ENCODE measurements at regions of chr19 and their contacts with region 1.

Region 1: GRCh38 chr19:19528721-19529490 is at the start of gene YJEFN3:
- DNase-seq: no peak
- ATAC-seq: no peak
- H3K4me3 ChIP-seq: no peak within 1 kb of the TSS
- H3K27ac ChIP-seq: no peak within 1 kb of the TSS
- H3K4me1 ChIP-seq: peaks cover 8% of the 10 kb centered on the region
- H3K27me3 ChIP-seq: no peaks in the 10 kb centered on the region
- CTCF ChIP-seq: no peak
- POLR2A ChIP-seq: no peak
- total RNA-seq, gene YJEFN3: 2.6 to 11.2 TPM

Region 2: DNA sequence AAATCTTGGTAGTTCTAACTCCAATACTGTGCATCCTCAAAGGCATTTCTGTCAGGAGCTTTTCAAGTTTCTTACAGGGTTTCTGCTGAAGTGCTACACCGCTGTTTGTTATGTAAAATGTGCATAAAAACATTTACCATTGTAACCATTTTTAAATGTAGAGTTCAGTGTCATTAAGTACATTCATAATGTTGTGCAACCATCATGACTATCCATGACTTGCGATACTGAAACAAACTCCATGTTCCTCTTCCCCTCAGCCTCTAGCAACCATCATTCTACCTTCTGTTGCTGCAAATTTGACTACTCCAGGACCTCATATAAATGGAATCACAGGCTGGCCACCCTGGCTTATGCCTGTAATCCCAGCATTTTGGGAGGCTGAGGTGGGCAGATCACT is 479.5 kb before region 1 on chr19:
- intact Hi-C with region 1: no loop called
- DNase-seq: no peak
- ATAC-seq: no peak
- H3K4me3 ChIP-seq: no peak overlapping the region
- H3K27ac ChIP-seq: no peak overlapping the region
- H3K4me1 ChIP-seq: no peaks in the 10 kb centered on the region
- H3K27me3 ChIP-seq: no peaks in the 10 kb centered on the region
- CTCF ChIP-seq: no peak
- POLR2A ChIP-seq: no peak

Region 3: GRCh38 chr19:19459707-19460251 is 69.1 kb before region 1 on chr19:
- intact Hi-C with region 1: no loop called
- DNase-seq: peak in 3 of 4 donors; percentile 27 to 55 (median 35)
- ATAC-seq: no peak
- H3K4me3 ChIP-seq: no peak overlapping the region
- H3K27ac ChIP-seq: peak overlapping the region in 2 of 4 donors; percentile 85 to 87
- H3K4me1 ChIP-seq: peaks cover 63% of the 10 kb centered on the region
- H3K27me3 ChIP-seq: no peaks in the 10 kb centered on the region
- CTCF ChIP-seq: no peak
- POLR2A ChIP-seq: no peak

Region 4: DNA sequence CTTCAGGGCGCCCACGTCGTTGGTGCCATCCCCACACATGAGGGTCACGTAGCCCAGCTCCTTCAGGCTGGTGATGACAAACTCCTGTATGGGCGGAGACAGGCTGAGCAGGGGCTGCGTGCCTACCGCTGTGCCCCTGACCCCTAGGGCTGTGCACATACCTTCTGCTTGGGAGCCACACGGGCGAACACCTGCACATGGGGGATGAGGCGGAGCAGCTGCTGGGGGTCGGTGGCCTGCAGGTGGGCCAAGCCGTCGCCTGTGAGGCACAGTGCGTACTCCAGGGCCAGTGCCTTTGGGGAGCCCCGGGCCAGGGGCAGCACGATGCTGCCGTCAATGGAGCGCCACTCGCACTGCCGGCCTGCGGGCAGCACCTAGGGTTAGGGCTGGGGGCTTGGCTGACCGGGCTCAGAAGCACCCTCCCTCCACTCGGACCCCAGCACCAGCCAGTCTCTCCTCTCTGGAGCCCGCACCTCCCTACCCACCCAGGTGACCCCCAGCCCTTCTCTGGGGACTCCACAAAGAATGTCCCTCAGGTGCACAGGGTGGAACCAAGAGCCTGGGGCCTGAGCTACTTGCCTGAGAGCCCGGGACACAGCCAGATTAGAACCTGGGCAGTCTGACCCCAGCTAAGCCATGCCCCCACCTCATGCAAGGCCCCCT is 120.8 kb after region 1 on chr19:
- intact Hi-C with region 1: loop called (anchors 5 kb)
- DNase-seq: no peak
- ATAC-seq: no peak
- H3K4me3 ChIP-seq: no peak overlapping the region
- H3K27ac ChIP-seq: no peak overlapping the region
- H3K4me1 ChIP-seq: no peaks in the 10 kb centered on the region
- H3K27me3 ChIP-seq: no peaks in the 10 kb centered on the region
- CTCF ChIP-seq: no peak
- POLR2A ChIP-seq: no peak

Measured in body of pancreas (tissue), 4 donors.